Activated CD4-positive, alpha-beta T cell treated with anti-CD3 and anti-CD28 coated beads, Interleukin-2, amount 10 ng/mL, durations not matched to agents 24 days and 14 days (primary cell): ENCODE measurements at regions of chr19 and their contacts with region 1.

Region 1: GRCh38 chr19:16495982-16496612 is at the starts of genes C19orf44 and CALR3:
- DNase-seq: peak; percentile 99
- H3K4me3 Mint-ChIP-seq: peak within 1 kb of the TSS; percentile 96
- H3K27ac Mint-ChIP-seq: peak within 1 kb of the TSS; percentile 93
- H3K4me1 Mint-ChIP-seq: peaks cover 14% of the 10 kb centered on the region
- H3K27me3 Mint-ChIP-seq: no peaks in the 10 kb centered on the region
- total RNA-seq, gene C19orf44: 4.9 and 5.4 TPM in 2 replicates
- total RNA-seq, gene CALR3: not detected in 2 replicates

Region 2: GRCh38 chr19:16472992-16473391 is 23.1 kb before region 1 on chr19:
- intact Hi-C with region 1: loop called (anchors 1 kb)
- DNase-seq: no peak
- H3K4me3 Mint-ChIP-seq: peak overlapping the region; percentile 21
- H3K27ac Mint-ChIP-seq: no peak overlapping the region
- H3K4me1 Mint-ChIP-seq: peaks cover 19% of the 10 kb centered on the region
- H3K27me3 Mint-ChIP-seq: peaks cover 6% of the 10 kb centered on the region

Region 3: GRCh38 chr19:16620018-16620417 is 123.9 kb after region 1 on chr19:
- intact Hi-C with region 1: loop called (anchors 2 kb)
- DNase-seq: no peak
- H3K4me3 Mint-ChIP-seq: no peak overlapping the region
- H3K27ac Mint-ChIP-seq: no peak overlapping the region
- H3K4me1 Mint-ChIP-seq: peaks cover 35% of the 10 kb centered on the region
- H3K27me3 Mint-ChIP-seq: no peaks in the 10 kb centered on the region

Region 4: GRCh38 chr19:16649734-16650133 is 153.6 kb after region 1 on chr19:
- intact Hi-C with region 1: no loop called
- DNase-seq: no peak
- H3K4me3 Mint-ChIP-seq: no peak overlapping the region
- H3K27ac Mint-ChIP-seq: no peak overlapping the region
- H3K4me1 Mint-ChIP-seq: peaks cover 9% of the 10 kb centered on the region
- H3K27me3 Mint-ChIP-seq: no peaks in the 10 kb centered on the region